ENCODE measurements at regions of chr9 and their contacts with region 1.

Region 1: DNA sequence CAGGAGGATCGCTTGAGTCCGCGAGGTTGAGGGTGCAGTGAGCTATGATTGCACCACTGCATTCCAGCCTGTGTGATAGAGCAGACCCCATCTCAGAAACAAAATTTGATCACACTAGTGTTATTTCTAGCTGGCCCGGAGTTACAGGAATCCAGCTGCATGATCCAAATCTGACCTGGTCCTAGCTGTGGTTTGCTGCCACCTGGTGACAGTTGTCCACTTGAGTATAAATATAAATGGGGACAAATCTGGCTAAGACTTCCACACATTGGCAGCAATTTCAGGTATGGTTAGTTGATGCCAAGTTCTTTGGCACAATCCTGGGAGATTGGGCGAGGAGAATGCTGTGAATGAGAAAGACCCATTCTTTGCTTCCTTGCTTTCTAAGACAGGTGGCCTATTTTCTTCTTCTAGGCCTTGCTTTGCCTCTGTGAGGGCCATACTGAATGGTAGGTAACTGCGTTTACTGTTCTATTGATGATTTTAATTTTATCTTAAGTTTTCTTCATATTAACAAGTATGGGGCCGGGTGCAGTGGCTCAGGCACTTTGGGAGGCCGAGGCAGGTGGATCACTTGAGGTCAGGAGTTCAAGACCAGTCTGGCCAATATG is 35.4 kb downstream of the UBE2R2 start:
- DNase-seq: peak; percentile 79
- ATAC-seq: peak; percentile 88

Region 2: DNA sequence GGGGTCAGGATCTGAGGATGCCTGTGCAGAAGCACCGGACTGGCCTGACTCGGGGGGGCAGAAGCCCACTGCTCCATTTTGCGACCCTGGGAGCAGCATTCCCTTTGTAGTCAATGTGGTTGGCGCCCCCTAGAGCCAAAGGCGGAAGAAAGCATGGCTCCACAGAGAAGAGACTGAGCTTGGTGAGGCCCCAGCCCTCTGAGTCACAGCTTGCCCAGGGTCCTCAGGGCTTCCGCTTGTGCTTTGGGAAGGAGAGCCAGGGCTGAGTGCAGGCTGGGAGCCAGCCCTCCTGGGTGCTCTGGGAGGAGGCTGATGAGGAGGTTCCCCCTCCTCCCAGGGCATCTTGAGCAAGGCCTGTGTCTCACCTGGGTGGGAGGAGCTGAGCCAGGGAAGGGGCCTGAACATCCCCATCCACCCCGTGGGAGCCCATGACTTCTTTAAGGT is 399.5 kb before region 1 on chr9:
- intact Hi-C with region 1: no loop called
- DNase-seq: no peak
- ATAC-seq: peak; percentile 40

Region 3: GRCh38 chr9:33791117-33791516 is 61.2 kb before region 1 on chr9:
- intact Hi-C with region 1: no loop called
- DNase-seq: no peak
- ATAC-seq: no peak

Region 4: DNA sequence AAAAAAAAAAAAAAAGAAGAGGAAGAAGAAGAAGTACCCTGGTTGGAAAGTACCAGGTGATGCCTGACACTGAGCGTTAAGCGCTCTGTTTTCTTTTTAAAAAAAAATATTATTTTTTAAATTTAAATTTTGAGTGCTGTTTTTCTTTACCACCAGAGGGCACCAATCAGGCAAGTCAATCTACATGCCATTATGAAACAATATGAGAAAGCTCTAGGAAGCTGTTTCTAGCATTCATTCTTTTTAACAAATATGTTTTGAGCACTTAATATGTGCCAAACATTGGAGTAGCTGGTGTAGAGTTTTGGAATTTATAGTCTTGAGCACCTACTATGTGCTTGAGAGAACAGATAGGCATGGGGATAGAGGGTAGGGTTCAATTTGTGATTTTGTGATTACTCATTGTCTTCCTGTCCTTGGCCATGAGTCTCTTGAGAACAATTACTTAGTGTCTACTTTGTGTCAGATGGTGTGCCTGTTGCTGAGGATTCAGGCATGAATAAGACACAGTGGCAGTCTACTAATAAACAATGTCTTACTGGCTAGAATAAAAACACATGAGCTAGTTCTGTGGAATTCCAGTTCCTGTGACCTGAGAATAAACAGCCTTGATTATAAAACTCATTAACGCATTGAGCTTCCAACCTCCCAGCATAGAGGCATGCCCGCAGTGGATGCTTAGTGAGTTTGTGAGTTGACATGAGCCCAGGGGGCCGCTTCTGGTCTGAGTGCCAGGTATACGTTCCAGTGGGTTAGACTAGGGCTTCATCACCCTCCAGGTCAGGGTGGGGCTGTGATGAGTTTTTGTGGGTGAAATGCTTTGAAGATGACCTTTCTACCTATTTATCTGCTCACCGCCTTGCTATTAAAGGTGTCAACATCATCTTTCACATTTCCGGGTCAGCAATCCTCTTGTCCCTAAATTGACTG is 38.3 kb before region 1 on chr9:
- intact Hi-C with region 1: loop called (anchors 5 kb)
- DNase-seq: no peak
- ATAC-seq: no peak